ENCODE measurements at regions of chr16 and their contacts with region 1.

Region 1: GRCh38 chr16:3880623-3881498 is at the start of gene CREBBP:
- DNase-seq: peak; percentile 95
- CTCF ChIP-seq: no peak

Region 2: DNA sequence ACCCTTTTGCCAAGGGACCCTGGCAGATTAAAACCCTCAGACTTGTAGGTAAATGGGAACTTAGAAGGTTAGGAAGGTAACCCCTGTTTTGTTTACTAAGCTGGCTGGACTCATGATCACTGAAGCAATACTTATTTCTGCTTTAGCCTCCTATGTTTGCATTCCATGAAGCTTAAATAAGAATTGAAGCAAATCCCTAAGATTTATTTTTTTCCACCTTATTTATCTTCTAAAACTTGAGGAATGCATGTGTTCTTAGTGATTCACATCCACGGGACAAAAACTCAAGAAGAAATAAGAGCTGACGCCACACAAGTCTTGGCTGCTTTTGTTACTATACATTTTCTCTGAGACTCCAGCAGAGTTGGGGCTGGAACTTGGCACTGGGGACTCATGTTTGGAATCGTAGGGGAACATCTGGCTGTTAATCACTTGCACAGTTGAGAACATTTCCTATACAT is 344.6 kb before region 1 on chr16:
- in situ Hi-C with region 1: loop called (anchors 25 kb)
- DNase-seq: no peak
- CTCF ChIP-seq: no peak

Region 3: GRCh38 chr16:3690470-3690928 is 190.4 kb before region 1 on chr16:
- in situ Hi-C with region 1: loop called (anchors 5 kb)
- DNase-seq: peak; percentile 89
- CTCF ChIP-seq: peak; percentile 94

Measured in GM13976 (cell line).